WTC11 (cell line): ENCODE measurements at regions of chr10 and their contacts with region 1.

Region 1: DNA sequence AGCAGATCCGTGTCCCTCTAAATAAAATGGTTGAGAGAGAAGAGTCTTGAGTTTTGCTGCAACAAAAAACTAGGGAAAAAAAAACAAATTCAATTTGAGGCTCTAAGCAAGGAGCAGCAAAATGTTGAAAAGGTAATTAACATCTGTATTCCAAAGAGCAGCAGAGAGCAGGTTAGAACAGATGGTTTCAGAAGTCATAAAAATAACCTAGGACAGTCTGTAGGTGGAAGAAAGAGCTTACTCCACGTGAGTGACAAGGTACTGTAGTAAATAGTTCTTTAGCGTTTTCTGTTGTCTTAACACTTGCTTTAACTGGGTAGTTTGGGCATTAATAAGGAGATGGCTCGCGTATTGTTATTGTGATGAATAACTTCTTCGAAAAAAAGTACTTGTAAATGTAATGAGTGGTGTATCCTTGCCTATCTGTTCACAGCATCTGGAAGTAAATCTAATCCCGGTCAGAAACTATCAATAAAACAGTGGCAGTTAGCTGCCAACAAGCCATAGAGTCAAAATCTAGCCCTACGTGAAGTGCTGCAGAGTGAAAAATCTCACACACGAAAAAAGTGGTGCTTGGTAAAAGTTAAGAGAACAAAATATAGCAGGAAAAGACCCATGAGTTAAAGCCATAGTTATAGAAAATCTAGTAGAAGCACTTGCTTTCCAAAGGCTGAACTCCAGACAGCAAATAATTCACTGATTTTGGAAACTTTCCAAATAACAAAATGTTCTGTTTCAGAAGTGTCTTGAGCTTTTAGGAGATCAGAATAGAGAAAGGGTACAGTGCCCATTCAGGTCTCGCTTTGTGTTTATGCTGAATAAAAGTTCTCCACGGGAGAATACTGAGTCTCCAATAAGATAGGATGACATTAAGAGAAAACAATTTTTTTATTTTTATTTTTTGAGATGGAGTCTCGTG is 49.3 kb upstream of the PARD3 start:
- DNase-seq: no peak
- ATAC-seq: no peak
- H3K4me3 Mint-ChIP-seq: no peak overlapping the region
- H3K27ac Mint-ChIP-seq: no peak overlapping the region
- H3K4me1 Mint-ChIP-seq: peaks cover 21% of the 10 kb centered on the region
- H3K27me3 Mint-ChIP-seq: no peaks in the 10 kb centered on the region
- CTCF ChIP-seq: no peak

Region 2: GRCh38 chr10:34854147-34854601 is 10.2 kb before region 1 on chr10:
- CTCF ChIA-PET with region 1: interaction called, 11 read pairs
- POLR2A ChIA-PET with region 1: no interaction called
- DNase-seq: no peak
- ATAC-seq: no peak; the same call in 1 of the 2 replicates
- H3K4me3 Mint-ChIP-seq: no peak overlapping the region
- H3K27ac Mint-ChIP-seq: no peak overlapping the region
- H3K4me1 Mint-ChIP-seq: peaks cover 8% of the 10 kb centered on the region
- H3K27me3 Mint-ChIP-seq: no peaks in the 10 kb centered on the region
- CTCF ChIP-seq: no peak